ENCODE measurements at regions of chr16 and their contacts with region 1.

Region 1: GRCh38 chr16:22098405-22099255 is 6.3 kb downstream of the VWA3A start:
- DNase-seq: peak; percentile 55
- H3K4me3 ChIP-seq: no peak overlapping the region
- H3K27ac ChIP-seq: no peak overlapping the region
- H3K4me1 ChIP-seq: no peaks in the 10 kb centered on the region
- H3K27me3 ChIP-seq: peaks cover 0 to 2% of the 10 kb centered on the region in 2 experiments
- CTCF ChIP-seq: peak; percentile 53 to 65
- POLR2A ChIP-seq: no peak

Region 2: GRCh38 chr16:21952793-21953540 is 145.7 kb before region 1 on chr16 and contains the start of gene UQCRC2:
- CTCF ChIA-PET with region 1: interaction called, 36 read pairs
- POLR2A ChIA-PET with region 1: no interaction called
- dilution Hi-C with region 1: no loop called
- intact Hi-C with region 1: loop called (anchors 1 kb)
- DNase-seq: peak; percentile 94
- H3K4me3 ChIP-seq: peak within 1 kb of the TSS; percentile 53 to 92 (median 83)
- H3K27ac ChIP-seq: peak within 1 kb of the TSS; percentile 97
- H3K4me1 ChIP-seq: peaks cover 16% of the 10 kb centered on the region
- H3K27me3 ChIP-seq: no peaks in the 10 kb centered on the region
- CTCF ChIP-seq: no peak
- POLR2A ChIP-seq: peak; percentile 87
- total RNA-seq, gene UQCRC2: 189 and 207 TPM in 2 replicates

Region 3: DNA sequence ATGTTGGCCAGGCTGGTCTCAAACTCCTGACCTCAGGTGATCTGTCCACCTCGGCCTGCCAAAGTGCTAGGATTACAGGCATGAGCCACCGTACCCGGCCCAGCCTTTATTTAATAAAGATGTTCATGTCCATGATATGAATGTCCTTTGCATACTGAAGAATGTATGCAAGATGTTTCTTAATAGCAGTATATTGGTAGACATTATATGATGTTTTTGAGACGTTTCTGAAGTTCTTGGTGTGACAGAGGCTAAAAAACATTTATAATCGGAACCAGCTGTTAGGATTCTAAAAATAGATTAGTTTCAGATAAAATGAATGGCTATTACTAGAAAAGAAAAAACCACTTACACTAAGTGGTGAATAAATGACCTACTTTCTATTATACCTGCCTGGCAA is 109.5 kb before region 1 on chr16:
- CTCF ChIA-PET with region 1: interaction called, 25 read pairs
- POLR2A ChIA-PET with region 1: no interaction called
- dilution Hi-C with region 1: no loop called
- intact Hi-C with region 1: no loop called
- DNase-seq: no peak
- H3K4me3 ChIP-seq: no peak overlapping the region
- H3K27ac ChIP-seq: no peak overlapping the region
- H3K4me1 ChIP-seq: no peaks in the 10 kb centered on the region
- H3K27me3 ChIP-seq: no peaks in the 10 kb centered on the region
- CTCF ChIP-seq: no peak
- POLR2A ChIP-seq: no peak

Region 4: GRCh38 chr16:22001591-22001990 is 97.0 kb before region 1 on chr16:
- CTCF ChIA-PET with region 1: interaction called, 100 read pairs
- POLR2A ChIA-PET with region 1: interaction called, 3 read pairs
- dilution Hi-C with region 1: no loop called
- intact Hi-C with region 1: loop called (anchors 1 kb)
- DNase-seq: no peak
- H3K4me3 ChIP-seq: no peak overlapping the region
- H3K27ac ChIP-seq: no peak overlapping the region
- H3K4me1 ChIP-seq: peaks cover 19% of the 10 kb centered on the region
- H3K27me3 ChIP-seq: no peaks in the 10 kb centered on the region
- CTCF ChIP-seq: no peak
- POLR2A ChIP-seq: no peak

Region 5: GRCh38 chr16:22007509-22008214 is 91.0 kb before region 1 on chr16 and contains the start of gene MOSMO:
- CTCF ChIA-PET with region 1: interaction called, 100 read pairs
- POLR2A ChIA-PET with region 1: no interaction called
- dilution Hi-C with region 1: no loop called
- intact Hi-C with region 1: no loop called
- DNase-seq: peak; percentile 72
- H3K4me3 ChIP-seq: peak within 1 kb of the TSS; percentile 63 to 86 (median 76)
- H3K27ac ChIP-seq: peak within 1 kb of the TSS; percentile 56
- H3K4me1 ChIP-seq: peaks cover 20% of the 10 kb centered on the region
- H3K27me3 ChIP-seq: no peaks in the 10 kb centered on the region
- CTCF ChIP-seq: peak in 1 of 2 donors; percentile 9
- POLR2A ChIP-seq: peak; percentile 58
- total RNA-seq, gene MOSMO: 22.0 and 23.2 TPM in 2 replicates

Region 6: DNA sequence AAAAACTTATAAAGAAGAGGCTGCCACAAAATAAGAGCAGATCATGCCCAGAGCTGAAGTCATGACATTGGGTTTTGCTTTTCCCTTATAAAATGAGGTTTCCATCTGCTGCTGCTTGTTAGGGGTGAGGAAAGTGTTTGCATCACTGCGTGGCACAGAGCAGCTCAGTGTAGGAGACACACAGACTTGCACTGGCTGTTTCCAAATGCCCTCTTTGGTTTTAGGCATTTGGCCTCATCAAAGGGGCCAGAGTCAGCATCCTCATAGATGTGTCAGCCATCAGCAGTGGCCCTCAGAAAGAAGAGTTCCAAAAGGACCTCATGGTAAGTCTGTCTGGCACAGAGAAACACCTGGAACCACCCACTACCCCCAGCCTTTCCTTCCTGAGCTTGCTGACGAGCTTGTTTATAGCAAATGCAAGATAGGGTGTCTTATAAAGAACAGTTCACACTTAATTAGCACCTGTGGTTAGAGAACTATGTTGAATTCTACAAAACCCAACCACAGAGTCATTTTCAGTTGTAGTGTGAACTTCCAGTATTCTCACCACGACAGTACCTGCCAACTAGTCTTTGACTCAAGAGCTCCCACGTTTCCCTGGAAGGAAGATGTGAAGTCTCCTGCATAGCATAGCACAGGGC is 10.7 kb after region 1 on chr16:
- CTCF ChIA-PET with region 1: interaction called, 15 read pairs
- POLR2A ChIA-PET with region 1: no interaction called
- dilution Hi-C with region 1: no loop called
- intact Hi-C with region 1: no loop called
- DNase-seq: no peak
- H3K4me3 ChIP-seq: no peak overlapping the region
- H3K27ac ChIP-seq: no peak overlapping the region
- H3K4me1 ChIP-seq: no peaks in the 10 kb centered on the region
- H3K27me3 ChIP-seq: peaks cover 13 to 22% of the 10 kb centered on the region in 2 experiments
- CTCF ChIP-seq: no peak
- POLR2A ChIP-seq: no peak

Region 7: DNA sequence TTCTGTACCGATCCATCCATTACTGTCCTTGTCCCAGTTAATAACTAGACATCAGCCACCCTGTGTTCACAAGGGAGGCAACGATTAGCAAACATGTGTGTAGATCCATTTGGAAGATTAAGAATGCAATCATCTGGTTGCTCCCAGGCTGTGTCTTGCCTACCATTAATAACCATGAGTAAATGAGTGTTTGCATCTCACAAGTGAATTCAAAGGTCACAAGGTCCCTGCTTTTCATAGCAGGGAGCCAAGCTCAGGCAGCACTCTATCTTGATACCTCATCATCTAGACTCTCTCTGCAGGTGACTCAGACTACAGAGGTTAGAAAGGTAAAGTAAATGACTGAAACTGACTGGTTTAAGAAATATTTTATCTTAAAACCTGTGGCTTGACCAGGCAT is 19.0 kb after region 1 on chr16:
- CTCF ChIA-PET with region 1: interaction called, 15 read pairs
- POLR2A ChIA-PET with region 1: no interaction called
- dilution Hi-C with region 1: no loop called
- intact Hi-C with region 1: no loop called
- DNase-seq: no peak
- H3K4me3 ChIP-seq: no peak overlapping the region
- H3K27ac ChIP-seq: no peak overlapping the region
- H3K4me1 ChIP-seq: no peaks in the 10 kb centered on the region
- H3K27me3 ChIP-seq: no peaks in the 10 kb centered on the region
- CTCF ChIP-seq: no peak
- POLR2A ChIP-seq: no peak

Region 8: DNA sequence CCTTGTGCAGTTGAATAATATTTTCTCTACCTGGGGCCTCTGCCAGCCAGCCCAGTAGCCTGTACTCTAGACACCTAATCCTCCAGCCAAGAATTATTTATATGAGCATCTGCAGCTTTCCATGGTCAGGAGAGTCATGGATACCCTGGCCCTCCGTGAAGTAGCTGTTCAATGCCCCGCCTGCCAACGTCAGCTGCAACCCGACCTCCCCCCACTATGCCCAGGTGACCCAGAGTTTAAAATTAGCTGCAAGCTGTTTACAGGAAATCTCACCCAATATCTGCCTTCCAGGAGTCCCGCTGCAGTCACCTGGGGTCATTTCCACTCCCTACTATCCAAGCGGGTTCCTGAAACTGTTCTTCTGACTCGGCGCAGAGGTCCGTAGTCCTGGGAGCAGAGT is 76.0 kb after region 1 on chr16:
- CTCF ChIA-PET with region 1: no interaction called
- POLR2A ChIA-PET with region 1: no interaction called
- dilution Hi-C with region 1: no loop called
- intact Hi-C with region 1: no loop called
- DNase-seq: no peak
- H3K4me3 ChIP-seq: no peak overlapping the region
- H3K27ac ChIP-seq: no peak overlapping the region
- H3K4me1 ChIP-seq: no peaks in the 10 kb centered on the region
- H3K27me3 ChIP-seq: no peaks in the 10 kb centered on the region
- CTCF ChIP-seq: no peak
- POLR2A ChIP-seq: no peak